Activated CD4-positive, alpha-beta memory T cell treated with anti-CD3 and anti-CD28 coated beads for 36 hours (primary cell): ENCODE measurements at regions of chr6 and their contacts with region 1.

Region 1: DNA sequence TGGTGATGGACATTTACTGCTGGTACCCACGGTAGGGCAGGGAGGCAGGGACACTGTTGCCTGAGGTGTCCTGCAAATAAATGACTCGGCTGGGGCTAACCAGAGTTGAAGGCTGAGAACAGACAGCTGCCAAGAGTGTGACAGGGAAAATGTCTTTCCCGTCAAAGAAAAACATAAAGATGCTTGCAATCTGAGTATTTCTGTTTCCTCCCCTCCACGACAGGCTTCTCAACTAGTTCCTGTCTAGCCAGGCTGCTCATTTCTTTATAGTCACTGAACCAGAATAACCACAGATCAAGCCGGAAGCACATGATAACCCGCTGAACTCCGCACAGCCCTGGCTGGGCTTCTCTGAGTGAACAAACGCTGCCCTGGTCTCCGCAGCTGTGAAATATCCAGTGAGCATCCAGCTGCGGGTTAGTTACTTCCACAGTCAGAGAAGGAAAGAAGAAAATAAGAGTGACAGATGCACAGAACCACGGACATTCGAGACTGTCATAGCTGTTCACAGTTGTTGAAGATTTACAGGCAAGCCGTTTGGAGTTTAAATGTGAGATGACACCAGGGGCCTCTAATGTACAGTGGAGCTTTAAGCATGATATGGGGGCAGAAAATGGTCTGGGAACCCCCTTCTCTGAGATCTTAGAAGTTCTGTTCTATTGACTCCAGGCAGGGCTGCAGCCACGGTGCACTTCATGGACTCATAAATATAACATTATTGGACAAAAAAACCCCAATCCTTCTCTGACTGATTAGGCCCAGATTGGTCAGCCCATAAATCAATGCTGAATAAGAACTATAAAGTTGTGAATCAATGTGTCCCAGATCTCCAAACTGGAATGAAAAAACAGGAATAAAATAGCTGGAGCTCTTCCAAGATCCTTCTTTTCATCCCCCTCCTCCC is 299.9 kb upstream of the SUPT3H start:
- DNase-seq: peak; percentile 77
- H3K4me3 Mint-ChIP-seq: peak overlapping the region; percentile 60
- H3K27ac Mint-ChIP-seq: peak overlapping the region; percentile 85
- H3K4me1 Mint-ChIP-seq: peaks cover 41% of the 10 kb centered on the region
- H3K27me3 Mint-ChIP-seq: no peaks in the 10 kb centered on the region

Region 2: GRCh38 chr6:45703041-45703739 is 25.6 kb after region 1 on chr6:
- CTCF ChIA-PET with region 1: interaction called, 3 read pairs
- POLR2A ChIA-PET with region 1: interaction called, 4 read pairs
- intact Hi-C with region 1: loop called (anchors 1 kb)
- DNase-seq: no peak
- H3K4me3 Mint-ChIP-seq: no peak overlapping the region
- H3K27ac Mint-ChIP-seq: peak overlapping the region; percentile 75
- H3K4me1 Mint-ChIP-seq: peaks cover 23% of the 10 kb centered on the region
- H3K27me3 Mint-ChIP-seq: no peaks in the 10 kb centered on the region